B cell (primary cell): ENCODE measurements at regions of chr22 and their contacts with region 1.

Region 1: GRCh38 chr22:46737976-46738646 is at the start of gene CERK:
- DNase-seq: peak; percentile 67
- ATAC-seq: peak; percentile 53
- H3K4me3 ChIP-seq: peak within 1 kb of the TSS; percentile 49 to 82 (median 67)
- H3K4me3 Mint-ChIP-seq: peak within 1 kb of the TSS; percentile 98
- H3K27ac ChIP-seq: peak within 1 kb of the TSS; percentile 20 to 54
- H3K27ac Mint-ChIP-seq: peak within 1 kb of the TSS; percentile 93
- H3K4me1 ChIP-seq: peaks cover 49 to 51% of the 10 kb centered on the region in 2 donors
- H3K4me1 Mint-ChIP-seq: peaks cover 40% of the 10 kb centered on the region
- H3K27me3 ChIP-seq: peaks cover 0 to 3% (median 0%) of the 10 kb centered on the region in 4 experiments
- H3K27me3 Mint-ChIP-seq: no peaks in the 10 kb centered on the region
- CTCF ChIP-seq: no peak
- total RNA-seq, gene CERK: 48.3 and 55.9 TPM in 2 replicates

Region 2: DNA sequence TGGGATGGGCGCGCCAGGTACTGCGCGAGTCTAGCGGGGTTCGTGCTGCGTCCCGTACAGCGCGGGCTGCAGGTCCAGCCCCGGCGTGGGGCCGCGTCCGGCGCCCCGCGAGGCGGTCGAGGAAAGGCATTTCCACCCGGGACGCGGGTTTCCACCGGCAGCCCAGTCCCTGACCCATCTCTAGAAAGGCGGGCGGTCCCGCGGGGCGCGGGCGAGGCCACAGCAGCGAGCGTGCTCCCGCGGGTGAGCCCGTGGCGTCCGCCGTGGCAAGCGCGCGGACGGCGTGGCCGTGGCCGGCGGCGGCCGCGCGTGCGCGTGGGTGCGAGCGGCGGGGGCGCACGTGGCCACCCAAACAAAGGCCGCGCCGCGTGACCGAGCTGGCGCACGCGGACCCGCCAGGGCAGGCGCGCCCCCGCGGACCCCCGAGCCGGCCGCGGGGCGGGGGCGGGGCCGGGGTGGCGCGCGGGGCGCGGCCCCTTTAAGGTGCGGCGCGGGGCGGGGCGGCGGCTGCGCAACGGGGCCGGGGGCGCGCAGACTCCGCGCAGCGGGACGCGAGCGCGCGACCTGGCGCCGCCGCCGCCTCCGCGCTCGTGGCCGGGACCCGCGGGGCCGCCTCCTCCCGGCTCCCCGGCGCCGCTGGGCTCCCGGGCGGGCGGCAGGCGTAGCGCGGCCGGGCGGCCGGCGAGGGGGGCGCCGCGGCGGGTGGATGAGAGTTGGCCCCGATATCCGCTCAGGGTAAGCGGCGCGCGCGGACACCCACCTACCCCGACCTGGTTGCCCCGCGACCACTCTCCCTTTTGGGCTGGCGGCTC is 161.3 kb before region 1 on chr22:
- CTCF ChIA-PET with region 1: no interaction called
- POLR2A ChIA-PET with region 1: no interaction called
- intact Hi-C with region 1: loop called (anchors 5 kb)
- DNase-seq: peak; percentile 79
- ATAC-seq: peak; percentile 76
- H3K4me3 ChIP-seq: peak overlapping the region in 4 of 5 experiments; percentile 52 to 64 (median 61)
- H3K4me3 Mint-ChIP-seq: peak overlapping the region; percentile 84
- H3K27ac ChIP-seq: no peak overlapping the region
- H3K27ac Mint-ChIP-seq: peak overlapping the region; percentile 84
- H3K4me1 ChIP-seq: peaks cover 45 to 54% of the 10 kb centered on the region in 2 donors
- H3K4me1 Mint-ChIP-seq: peaks cover 54% of the 10 kb centered on the region
- H3K27me3 ChIP-seq: no peaks in the 10 kb centered on the region
- H3K27me3 Mint-ChIP-seq: no peaks in the 10 kb centered on the region
- CTCF ChIP-seq: no peak

Region 3: GRCh38 chr22:46674367-46674781 is 63.7 kb before region 1 on chr22:
- CTCF ChIA-PET with region 1: no interaction called
- POLR2A ChIA-PET with region 1: no interaction called
- intact Hi-C with region 1: loop called (anchors 2 kb)
- DNase-seq: peak; percentile 89
- ATAC-seq: peak; percentile 78
- H3K4me3 ChIP-seq: peak overlapping the region; percentile 2 to 40 (median 27)
- H3K4me3 Mint-ChIP-seq: peak overlapping the region; percentile 93
- H3K27ac ChIP-seq: peak overlapping the region in 1 of 2 donors; percentile 65
- H3K27ac Mint-ChIP-seq: peak overlapping the region; percentile 92
- H3K4me1 ChIP-seq: peaks cover 32 to 39% of the 10 kb centered on the region in 2 donors
- H3K4me1 Mint-ChIP-seq: peaks cover 34% of the 10 kb centered on the region
- H3K27me3 ChIP-seq: peaks cover 0 to 21% (median 0%) of the 10 kb centered on the region in 4 experiments
- H3K27me3 Mint-ChIP-seq: no peaks in the 10 kb centered on the region
- CTCF ChIP-seq: no peak

Region 4: GRCh38 chr22:46748908-46749675 is 11.0 kb after region 1 on chr22:
- CTCF ChIA-PET with region 1: interaction called, 87 read pairs
- POLR2A ChIA-PET with region 1: no interaction called
- intact Hi-C with region 1: no loop called
- DNase-seq: peak; percentile 44
- ATAC-seq: peak; percentile 10
- H3K4me3 ChIP-seq: no peak overlapping the region
- H3K4me3 Mint-ChIP-seq: peak overlapping the region; percentile 45
- H3K27ac ChIP-seq: no peak overlapping the region
- H3K27ac Mint-ChIP-seq: peak overlapping the region; percentile 62
- H3K4me1 ChIP-seq: peaks cover 13 to 34% of the 10 kb centered on the region in 2 donors
- H3K4me1 Mint-ChIP-seq: peaks cover 17% of the 10 kb centered on the region
- H3K27me3 ChIP-seq: peaks cover 0 to 6% (median 0%) of the 10 kb centered on the region in 4 experiments
- H3K27me3 Mint-ChIP-seq: peaks cover 8% of the 10 kb centered on the region
- CTCF ChIP-seq: no peak

Region 5: GRCh38 chr22:46774253-46774979 is 36.3 kb after region 1 on chr22:
- CTCF ChIA-PET with region 1: interaction called, 6 read pairs
- POLR2A ChIA-PET with region 1: interaction called, 6 read pairs
- intact Hi-C with region 1: loop called (anchors 1 kb)
- DNase-seq: peak; percentile 84
- ATAC-seq: peak; percentile 64
- H3K4me3 ChIP-seq: peak overlapping the region; percentile 21 to 49 (median 37)
- H3K4me3 Mint-ChIP-seq: peak overlapping the region; percentile 79
- H3K27ac ChIP-seq: peak overlapping the region; percentile 87 to 91
- H3K27ac Mint-ChIP-seq: peak overlapping the region; percentile 93
- H3K4me1 ChIP-seq: peaks cover 93% of the 10 kb centered on the region in 2 donors
- H3K4me1 Mint-ChIP-seq: peaks cover 89% of the 10 kb centered on the region
- H3K27me3 ChIP-seq: no peaks in the 10 kb centered on the region
- H3K27me3 Mint-ChIP-seq: no peaks in the 10 kb centered on the region
- CTCF ChIP-seq: no peak